Caco-2 (cell line): ENCODE measurements at regions of chr11 and their contacts with region 1.

Region 1: GRCh38 chr11:77820563-77821348 is at the starts of genes AAMDC and RSF1:
- DNase-seq: peak; percentile 100
- H3K4me3 ChIP-seq: peak within 1 kb of the TSS; percentile 100
- H3K4me3 Mint-ChIP-seq: peak within 1 kb of the TSS; percentile 84
- H3K27ac Mint-ChIP-seq: peak within 1 kb of the TSS; percentile 77
- H3K4me1 ChIP-seq: peaks cover 36% of the 10 kb centered on the region
- H3K4me1 Mint-ChIP-seq: peaks cover 6% of the 10 kb centered on the region
- H3K27me3 ChIP-seq: no peaks in the 10 kb centered on the region
- H3K27me3 Mint-ChIP-seq: no peaks in the 10 kb centered on the region
- CTCF ChIP-seq: peak; percentile 72 to 92
- total RNA-seq, gene AAMDC: 87.7 and 89.7 TPM in 2 replicates
- total RNA-seq, gene RSF1: 108 and 121 TPM in 2 replicates

Region 2: DNA sequence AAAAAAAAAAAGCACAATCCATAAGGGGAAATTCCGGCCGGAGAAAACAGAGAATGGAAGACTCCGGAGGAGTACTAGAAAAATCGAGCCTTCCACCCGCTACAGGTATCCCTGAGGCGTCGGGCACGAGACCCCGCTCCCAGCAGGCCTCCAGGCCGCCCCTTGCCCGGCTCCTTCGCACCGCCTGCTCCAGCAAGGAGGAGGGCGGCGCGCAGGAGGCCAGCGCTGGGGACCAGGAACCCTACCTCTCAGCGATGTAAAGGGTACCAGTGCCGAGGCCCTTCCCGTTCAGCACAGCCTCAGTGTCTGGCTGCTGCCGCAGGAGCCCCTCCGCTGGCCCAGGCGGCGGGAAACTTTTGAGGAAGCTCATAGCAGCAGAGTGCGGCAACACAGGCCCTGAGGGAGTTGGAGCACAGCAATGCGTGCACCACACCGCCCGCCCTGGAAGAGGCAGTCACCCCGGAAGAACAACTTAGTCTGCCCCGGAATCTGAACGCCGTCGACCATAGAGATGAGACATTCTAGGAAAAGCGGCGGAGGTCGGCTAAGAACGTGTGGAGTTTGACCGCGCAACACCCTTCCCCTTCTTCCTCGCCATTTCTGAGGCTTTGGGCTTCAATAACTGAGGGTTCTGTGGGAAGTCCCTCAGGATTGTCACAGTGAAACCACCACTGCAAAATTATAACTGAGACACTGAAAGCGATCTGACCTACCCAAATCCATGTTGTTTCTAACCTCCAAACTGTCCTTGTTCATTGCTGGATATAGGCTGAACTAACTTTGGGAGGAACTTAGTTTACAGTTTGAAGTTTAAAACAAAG is 183.2 kb before region 1 on chr11 and contains the start of gene CLNS1A:
- CTCF ChIA-PET with region 1: no interaction called
- POLR2A ChIA-PET with region 1: interaction called, 3 read pairs
- intact Hi-C with region 1: loop called (anchors 2 kb)
- DNase-seq: peak; percentile 95 to 96
- H3K4me3 ChIP-seq: peak within 1 kb of the TSS; percentile 80
- H3K4me3 Mint-ChIP-seq: peak within 1 kb of the TSS; percentile 88
- H3K27ac Mint-ChIP-seq: peak within 1 kb of the TSS; percentile 85
- H3K4me1 ChIP-seq: peaks cover 4% of the 10 kb centered on the region
- H3K4me1 Mint-ChIP-seq: peaks cover 15% of the 10 kb centered on the region
- H3K27me3 ChIP-seq: no peaks in the 10 kb centered on the region
- H3K27me3 Mint-ChIP-seq: no peaks in the 10 kb centered on the region
- CTCF ChIP-seq: peak in 1 of 2 experiments; percentile 8
- total RNA-seq, gene CLNS1A: 282 and 306 TPM in 2 replicates

Region 3: GRCh38 chr11:77705195-77705876 is 115.4 kb before region 1 on chr11:
- CTCF ChIA-PET with region 1: interaction called, 4 read pairs
- POLR2A ChIA-PET with region 1: no interaction called
- intact Hi-C with region 1: loop called (anchors 5 kb)
- DNase-seq: peak; percentile 79 to 89
- H3K4me3 ChIP-seq: no peak overlapping the region
- H3K4me3 Mint-ChIP-seq: peak overlapping the region; percentile 52
- H3K27ac Mint-ChIP-seq: peak overlapping the region; percentile 33
- H3K4me1 ChIP-seq: peaks cover 19% of the 10 kb centered on the region
- H3K4me1 Mint-ChIP-seq: peaks cover 10% of the 10 kb centered on the region
- H3K27me3 ChIP-seq: no peaks in the 10 kb centered on the region
- H3K27me3 Mint-ChIP-seq: no peaks in the 10 kb centered on the region
- CTCF ChIP-seq: no peak

Region 4: GRCh38 chr11:77725433-77725832 is 95.3 kb before region 1 on chr11:
- CTCF ChIA-PET with region 1: no interaction called
- POLR2A ChIA-PET with region 1: no interaction called
- intact Hi-C with region 1: no loop called
- DNase-seq: no peak
- H3K4me3 ChIP-seq: no peak overlapping the region
- H3K4me3 Mint-ChIP-seq: no peak overlapping the region
- H3K27ac Mint-ChIP-seq: no peak overlapping the region
- H3K4me1 ChIP-seq: peaks cover 28% of the 10 kb centered on the region
- H3K4me1 Mint-ChIP-seq: peaks cover 21% of the 10 kb centered on the region
- H3K27me3 ChIP-seq: no peaks in the 10 kb centered on the region
- H3K27me3 Mint-ChIP-seq: no peaks in the 10 kb centered on the region
- CTCF ChIP-seq: no peak

Region 5: GRCh38 chr11:77776455-77776854 is 44.3 kb before region 1 on chr11:
- CTCF ChIA-PET with region 1: interaction called, 3 read pairs
- POLR2A ChIA-PET with region 1: interaction called, 5 read pairs
- intact Hi-C with region 1: loop called (anchors 1 kb)
- DNase-seq: peak in 1 of 2 experiments; percentile 46
- H3K4me3 ChIP-seq: no peak overlapping the region
- H3K4me3 Mint-ChIP-seq: no peak overlapping the region
- H3K27ac Mint-ChIP-seq: no peak overlapping the region
- H3K4me1 ChIP-seq: peaks cover 21% of the 10 kb centered on the region
- H3K4me1 Mint-ChIP-seq: peaks cover 34% of the 10 kb centered on the region
- H3K27me3 ChIP-seq: no peaks in the 10 kb centered on the region
- H3K27me3 Mint-ChIP-seq: no peaks in the 10 kb centered on the region
- CTCF ChIP-seq: peak; percentile 49 to 73

Region 6: DNA sequence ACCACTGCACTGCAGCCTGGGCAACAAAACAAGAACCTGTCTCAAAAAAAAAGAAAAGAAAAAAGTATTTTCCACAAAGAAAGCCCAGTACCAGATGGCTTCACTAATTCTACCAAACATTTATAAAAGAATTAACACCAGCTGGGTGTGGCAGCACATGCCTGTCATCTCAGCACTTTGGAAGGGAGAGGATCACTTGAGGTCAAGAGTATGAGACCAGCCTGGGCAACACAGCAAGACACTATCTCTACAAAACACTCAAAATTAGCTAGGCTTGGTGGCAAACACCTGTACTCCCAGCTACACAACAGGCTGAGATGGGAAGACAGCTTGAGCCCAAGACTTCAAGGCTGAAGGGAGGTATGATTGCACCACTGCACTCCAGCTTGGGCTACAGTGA is 20.3 kb before region 1 on chr11:
- CTCF ChIA-PET with region 1: no interaction called
- POLR2A ChIA-PET with region 1: interaction called, 15 read pairs
- intact Hi-C with region 1: loop called (anchors 1 kb)
- DNase-seq: no peak
- H3K4me3 ChIP-seq: no peak overlapping the region
- H3K4me3 Mint-ChIP-seq: peak overlapping the region; percentile 64
- H3K27ac Mint-ChIP-seq: peak overlapping the region; percentile 94
- H3K4me1 ChIP-seq: peaks cover 39% of the 10 kb centered on the region
- H3K4me1 Mint-ChIP-seq: peaks cover 34% of the 10 kb centered on the region
- H3K27me3 ChIP-seq: no peaks in the 10 kb centered on the region
- H3K27me3 Mint-ChIP-seq: no peaks in the 10 kb centered on the region
- CTCF ChIP-seq: no peak